Heart left ventricle (tissue), 16 donors: ENCODE measurements at regions of chr3 and their contacts with region 1.

Region 1: GRCh38 chr3:39107388-39108199 is at the starts of genes GORASP1 and TTC21A:
- DNase-seq: peak; percentile 91 to 94 (median 91)
- ATAC-seq: peak; percentile 82 to 94 (median 92)
- H3K4me3 ChIP-seq: peak within 1 kb of the TSS; percentile 64 to 99 (median 94)
- H3K27ac ChIP-seq: peak within 1 kb of the TSS; percentile 92 to 99 (median 96)
- H3K4me1 ChIP-seq: peaks cover 6 to 49% (median 40%) of the 10 kb centered on the region in 12 donors
- H3K27me3 ChIP-seq: no peaks in the 10 kb centered on the region
- CTCF ChIP-seq: no peak
- POLR2A ChIP-seq: peak in 1 of 2 donors; percentile 90
- total RNA-seq, gene GORASP1: 35.3 to 52.5 (median 42.3) TPM
- total RNA-seq, gene TTC21A: 0.83 to 4.8 (median 2.0) TPM

Region 2: GRCh38 chr3:39051647-39052561 is 55.7 kb before region 1 on chr3 and contains the starts of genes SCN11A and WDR48:
- intact Hi-C with region 1: loop called in 1 of 10 experiments (anchors 5 kb)
- DNase-seq: peak; percentile 94 to 97 (median 96)
- ATAC-seq: peak; percentile 97 to 100 (median 99)
- H3K4me3 ChIP-seq: peak within 1 kb of the TSS; percentile 72 to 99 (median 96)
- H3K27ac ChIP-seq: peak within 1 kb of the TSS; percentile 74 to 93 (median 90)
- H3K4me1 ChIP-seq: peaks cover 4 to 48% (median 23%) of the 10 kb centered on the region in 12 donors
- H3K27me3 ChIP-seq: no peaks in the 10 kb centered on the region
- CTCF ChIP-seq: peak in 1 of 12 donors; percentile 11
- POLR2A ChIP-seq: peak in 1 of 2 donors; percentile 87
- total RNA-seq, gene SCN11A: 0.05 to 0.13 (median 0.09) TPM in 6 of 9 donors, not detected in the others
- total RNA-seq, gene WDR48: 17.9 to 35.4 (median 23.6) TPM

Region 3: DNA sequence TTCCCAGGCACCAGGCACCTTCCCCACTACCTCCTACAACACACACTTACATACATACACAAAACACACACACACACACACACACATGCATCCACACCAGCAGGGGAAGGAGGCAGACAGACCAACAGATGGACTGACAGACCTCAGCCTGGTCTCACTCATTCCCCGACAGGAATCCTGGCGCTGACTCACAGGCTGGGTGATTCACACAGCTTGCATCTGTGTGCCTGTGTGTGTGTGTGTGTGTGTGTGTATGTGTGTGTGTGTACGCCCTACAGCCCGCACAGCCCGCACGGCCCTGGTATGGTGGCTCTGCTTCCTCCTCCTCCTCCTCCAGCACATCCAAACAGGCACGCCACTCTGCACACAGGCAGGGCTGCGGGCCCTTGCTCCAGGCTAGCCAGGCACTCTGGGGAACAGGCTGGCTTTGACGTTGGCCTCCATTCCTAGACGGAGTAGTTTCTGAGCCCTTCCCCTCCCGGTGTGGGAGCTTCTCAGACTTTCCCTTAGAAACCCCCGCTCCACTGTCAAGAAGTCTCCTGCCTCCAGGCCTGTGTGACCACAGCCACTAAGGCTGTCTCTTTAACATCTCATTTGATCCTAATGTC is 39.5 kb after region 1 on chr3:
- intact Hi-C with region 1: loop called in 1 of 10 experiments (anchors 5 kb)
- DNase-seq: peak; percentile 75 to 93 (median 86)
- ATAC-seq: peak; percentile 38 to 71 (median 63)
- H3K4me3 ChIP-seq: peak overlapping the region in 8 of 12 donors; percentile 1 to 96 (median 24)
- H3K27ac ChIP-seq: peak overlapping the region; percentile 6 to 100 (median 82)
- H3K4me1 ChIP-seq: peaks cover 35 to 87% (median 72%) of the 10 kb centered on the region in 12 donors
- H3K27me3 ChIP-seq: no peaks in the 10 kb centered on the region
- CTCF ChIP-seq: no peak
- POLR2A ChIP-seq: peak in 1 of 2 donors; percentile 9

Region 4: DNA sequence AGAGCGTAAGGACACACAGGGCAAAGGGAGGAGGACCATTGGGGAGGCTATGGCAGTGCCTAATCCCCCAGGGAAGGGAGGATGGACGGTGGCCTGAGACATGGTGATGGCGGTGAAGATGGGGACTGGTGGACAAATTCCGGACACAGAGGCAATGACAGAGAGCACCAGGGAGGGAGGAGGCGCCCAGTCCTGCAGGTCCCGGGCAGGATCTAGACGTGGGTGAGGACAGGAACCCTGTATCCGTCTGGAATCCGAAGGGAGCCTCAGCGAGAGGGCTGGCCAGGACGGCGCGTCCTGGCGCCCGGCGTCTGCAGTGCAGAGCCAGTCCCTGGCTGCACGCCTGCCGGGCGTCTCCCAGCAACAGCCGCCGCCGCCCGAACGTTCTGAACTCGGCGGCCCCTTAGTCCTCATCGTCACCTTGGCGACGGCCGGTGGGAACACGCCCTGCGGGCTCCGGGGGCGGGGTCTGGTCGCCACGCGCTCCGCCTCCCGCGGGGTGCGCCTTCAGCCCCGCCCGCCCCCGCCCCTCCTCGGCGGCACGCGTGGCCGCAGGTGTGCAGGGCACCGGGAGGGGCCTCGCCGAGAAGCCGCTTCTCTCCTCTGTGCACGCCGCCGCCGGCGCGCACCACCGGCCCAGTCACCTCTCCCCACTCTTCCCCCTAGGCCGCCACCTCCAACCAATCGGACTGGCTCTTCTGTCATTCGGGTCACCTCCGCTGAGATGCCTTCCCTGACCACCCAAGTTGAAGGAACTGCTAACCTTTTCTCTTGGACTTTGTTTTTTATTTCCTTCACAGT is 73.2 kb after region 1 on chr3:
- intact Hi-C with region 1: loop called in 5 of 10 experiments (anchors 2 to 5 kb)
- DNase-seq: peak; percentile 93 to 96 (median 95)
- ATAC-seq: peak; percentile 80 to 89 (median 84)
- H3K4me3 ChIP-seq: peak overlapping the region in 11 of 12 donors; percentile 15 to 53 (median 47)
- H3K27ac ChIP-seq: peak overlapping the region; percentile 69 to 99 (median 94)
- H3K4me1 ChIP-seq: peaks cover 3 to 84% (median 44%) of the 10 kb centered on the region in 12 donors
- H3K27me3 ChIP-seq: no peaks in the 10 kb centered on the region
- CTCF ChIP-seq: peak in 9 of 12 donors; percentile 9 to 53 (median 32)
- POLR2A ChIP-seq: peak in 1 of 2 donors; percentile 50

Region 5: DNA sequence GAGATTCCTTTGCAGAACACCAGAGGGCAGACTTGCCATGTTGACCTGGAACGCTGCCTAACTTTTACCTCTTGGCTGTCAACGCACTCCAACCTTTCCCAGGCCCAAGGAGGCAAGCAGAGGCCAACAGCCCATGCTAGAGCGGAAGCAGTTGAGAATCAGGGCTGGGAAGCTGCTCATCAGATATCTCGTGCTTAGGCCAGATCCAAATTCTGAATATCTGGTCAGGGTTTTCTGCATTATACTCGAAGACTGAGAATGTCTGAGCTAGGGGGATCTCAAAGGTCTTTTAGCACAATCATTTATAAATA is 82.3 kb after region 1 on chr3:
- intact Hi-C with region 1: loop called in 1 of 10 experiments (anchors 5 kb)
- DNase-seq: peak in 4 of 5 donors; percentile 69 to 80 (median 78)
- ATAC-seq: peak; percentile 15 to 40 (median 30)
- H3K4me3 ChIP-seq: peak overlapping the region; percentile 9 to 72 (median 61)
- H3K27ac ChIP-seq: peak overlapping the region; percentile 41 to 99 (median 92)
- H3K4me1 ChIP-seq: peaks cover 0 to 71% (median 28%) of the 10 kb centered on the region in 12 donors
- H3K27me3 ChIP-seq: no peaks in the 10 kb centered on the region
- CTCF ChIP-seq: peak; percentile 64 to 82 (median 78)
- POLR2A ChIP-seq: no peak

Region 6: GRCh38 chr3:39288300-39288808 is 180.8 kb after region 1 on chr3:
- intact Hi-C with region 1: loop called in 3 of 10 experiments (anchors 1 to 5 kb)
- DNase-seq: peak; percentile 76 to 85 (median 78)
- ATAC-seq: peak; percentile 87 to 97 (median 94)
- H3K4me3 ChIP-seq: no peak overlapping the region
- H3K27ac ChIP-seq: no peak overlapping the region
- H3K4me1 ChIP-seq: peaks cover 0 to 17% (median 0%) of the 10 kb centered on the region in 12 donors
- H3K27me3 ChIP-seq: no peaks in the 10 kb centered on the region
- CTCF ChIP-seq: peak; percentile 79 to 96 (median 92)
- POLR2A ChIP-seq: no peak

Region 7: GRCh38 chr3:39383045-39383880 is 275.7 kb after region 1 on chr3 and contains the start of gene SLC25A38:
- intact Hi-C with region 1: loop called in 3 of 10 experiments (anchors 10 kb)
- DNase-seq: peak; percentile 69 to 85 (median 80)
- ATAC-seq: peak; percentile 62 to 83 (median 79)
- H3K4me3 ChIP-seq: peak within 1 kb of the TSS; percentile 67 to 96 (median 80)
- H3K27ac ChIP-seq: peak within 1 kb of the TSS; percentile 51 to 97 (median 90)
- H3K4me1 ChIP-seq: peaks cover 0 to 43% (median 21%) of the 10 kb centered on the region in 12 donors
- H3K27me3 ChIP-seq: no peaks in the 10 kb centered on the region
- CTCF ChIP-seq: peak in 7 of 12 donors; percentile 8 to 53 (median 26)
- POLR2A ChIP-seq: no peak
- total RNA-seq, gene SLC25A38: 13.6 to 30.6 (median 20.9) TPM